Ascending aorta (tissue), 2 donors: ENCODE measurements at regions of chr18 and their contacts with region 1.

Region 1: GRCh38 chr18:42781298-42781815 is 334.1 kb downstream of the RIT2 start:
- DNase-seq: no peak
- H3K4me3 ChIP-seq: no peak overlapping the region
- H3K27ac ChIP-seq: no peak overlapping the region
- H3K4me1 ChIP-seq: no peaks in the 10 kb centered on the region
- H3K27me3 ChIP-seq: no peaks in the 10 kb centered on the region
- CTCF ChIP-seq: no peak

Region 2: GRCh38 chr18:42730272-42730671 is 51.1 kb before region 1 on chr18:
- intact Hi-C with region 1: loop called (anchors 10 kb)
- DNase-seq: no peak
- H3K4me3 ChIP-seq: no peak overlapping the region
- H3K27ac ChIP-seq: no peak overlapping the region
- H3K4me1 ChIP-seq: no peaks in the 10 kb centered on the region
- H3K27me3 ChIP-seq: no peaks in the 10 kb centered on the region
- CTCF ChIP-seq: no peak

Region 3: DNA sequence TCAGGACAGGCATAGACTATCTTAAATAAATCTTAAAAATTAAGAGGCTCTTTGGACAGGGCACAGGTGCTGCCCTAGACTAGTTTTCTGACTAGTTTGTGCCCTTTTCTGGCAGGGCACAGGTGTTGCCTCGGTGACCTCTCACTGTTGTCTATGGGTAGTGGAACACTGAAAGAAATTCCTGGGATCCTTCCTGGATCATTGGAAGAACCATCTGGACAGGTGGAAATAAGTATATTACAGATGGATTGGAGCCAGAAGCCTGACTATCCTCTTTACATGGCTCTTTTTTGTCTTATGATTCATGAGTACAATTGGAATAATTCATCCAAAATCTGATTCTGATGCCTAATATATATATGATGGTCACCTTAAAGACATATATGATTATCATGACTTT is 47.5 kb after region 1 on chr18:
- intact Hi-C with region 1: no loop called
- DNase-seq: no peak
- H3K4me3 ChIP-seq: no peak overlapping the region
- H3K27ac ChIP-seq: no peak overlapping the region
- H3K4me1 ChIP-seq: no peaks in the 10 kb centered on the region
- H3K27me3 ChIP-seq: no peaks in the 10 kb centered on the region
- CTCF ChIP-seq: no peak

Region 4: DNA sequence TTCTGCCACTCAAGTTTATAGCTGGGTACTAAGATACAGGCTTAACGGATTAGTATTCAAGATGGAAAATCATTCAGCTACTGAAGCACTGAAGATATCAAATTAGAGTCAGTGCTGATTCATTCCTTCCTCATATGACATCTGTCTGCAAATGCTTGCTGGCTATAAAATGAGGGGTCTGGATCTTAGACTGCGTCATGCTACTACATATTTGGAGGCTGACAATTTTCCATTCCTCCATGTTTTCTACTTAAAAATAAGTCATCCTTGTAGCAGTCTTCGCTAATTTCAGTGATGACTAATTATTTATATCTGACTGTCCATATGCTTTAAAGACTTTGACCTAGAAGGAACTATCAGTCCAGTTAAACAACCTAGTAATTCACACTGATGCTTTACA is 100.8 kb after region 1 on chr18:
- intact Hi-C with region 1: no loop called
- DNase-seq: no peak
- H3K4me3 ChIP-seq: no peak overlapping the region
- H3K27ac ChIP-seq: no peak overlapping the region
- H3K4me1 ChIP-seq: no peaks in the 10 kb centered on the region
- H3K27me3 ChIP-seq: no peaks in the 10 kb centered on the region
- CTCF ChIP-seq: no peak